MCF 10A (cell line): ENCODE measurements at regions of chr1 and their contacts with region 1.

Region 1: GRCh38 chr1:224851210-224851847 is 78.1 kb upstream of the DNAH14 start:
- DNase-seq: peak; percentile 85
- H3K4me3 Mint-ChIP-seq: no peak overlapping the region
- H3K27ac Mint-ChIP-seq: no peak overlapping the region
- H3K4me1 Mint-ChIP-seq: peaks cover 6% of the 10 kb centered on the region
- H3K27me3 Mint-ChIP-seq: peaks cover 9% of the 10 kb centered on the region
- CTCF ChIP-seq: peak; percentile 98

Region 2: GRCh38 chr1:224528900-224529299 is 322.4 kb before region 1 on chr1:
- CTCF ChIA-PET with region 1: interaction called, 45 read pairs
- POLR2A ChIA-PET with region 1: no interaction called
- intact Hi-C with region 1: no loop called
- DNase-seq: peak; percentile 76
- H3K4me3 Mint-ChIP-seq: no peak overlapping the region
- H3K27ac Mint-ChIP-seq: no peak overlapping the region
- H3K4me1 Mint-ChIP-seq: peaks cover 24% of the 10 kb centered on the region
- H3K27me3 Mint-ChIP-seq: no peaks in the 10 kb centered on the region
- CTCF ChIP-seq: no peak

Region 3: DNA sequence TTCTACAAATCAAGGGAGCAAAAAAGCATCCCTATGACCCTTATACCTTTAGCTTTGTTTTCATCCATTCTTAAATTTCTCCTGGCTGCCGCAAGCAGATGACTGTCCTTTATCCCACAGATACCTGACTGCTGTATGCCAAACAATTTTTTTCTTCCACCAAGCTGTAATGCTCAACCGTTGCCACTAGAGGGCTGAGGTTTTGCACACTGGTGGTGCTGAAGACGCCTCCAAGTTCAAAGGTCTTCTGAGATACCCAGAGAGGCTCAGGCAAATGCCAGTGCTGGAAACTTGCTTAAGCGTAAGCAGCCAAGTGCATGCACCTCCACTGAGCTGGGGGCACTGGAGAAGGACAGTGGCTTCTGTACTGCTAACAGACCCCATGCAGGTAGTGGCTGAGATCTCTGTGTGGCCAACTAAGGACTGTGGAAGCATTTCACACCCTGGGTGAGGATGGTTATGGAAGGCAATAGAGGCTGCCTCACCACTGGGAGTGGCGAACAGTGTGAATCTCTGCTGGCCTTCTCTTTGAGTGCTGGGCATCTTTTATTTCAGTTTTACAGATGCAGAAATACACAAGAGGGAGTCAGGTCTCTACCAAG is 206.7 kb before region 1 on chr1:
- CTCF ChIA-PET with region 1: interaction called, 278 read pairs
- POLR2A ChIA-PET with region 1: interaction called, 3 read pairs
- intact Hi-C with region 1: loop called (anchors 1 kb)
- DNase-seq: peak; percentile 83
- H3K4me3 Mint-ChIP-seq: no peak overlapping the region
- H3K27ac Mint-ChIP-seq: no peak overlapping the region
- H3K4me1 Mint-ChIP-seq: no peaks in the 10 kb centered on the region
- H3K27me3 Mint-ChIP-seq: peaks cover 21% of the 10 kb centered on the region
- CTCF ChIP-seq: peak; percentile 97

Region 4: GRCh38 chr1:224726441-224727182 is 124.7 kb before region 1 on chr1:
- CTCF ChIA-PET with region 1: interaction called, 29 read pairs
- POLR2A ChIA-PET with region 1: no interaction called
- intact Hi-C with region 1: no loop called
- DNase-seq: peak; percentile 86
- H3K4me3 Mint-ChIP-seq: no peak overlapping the region
- H3K27ac Mint-ChIP-seq: peak overlapping the region; percentile 87
- H3K4me1 Mint-ChIP-seq: peaks cover 34% of the 10 kb centered on the region
- H3K27me3 Mint-ChIP-seq: no peaks in the 10 kb centered on the region
- CTCF ChIP-seq: no peak

Region 5: GRCh38 chr1:224817382-224817781 is 33.9 kb before region 1 on chr1:
- CTCF ChIA-PET with region 1: interaction called, 23 read pairs
- POLR2A ChIA-PET with region 1: interaction called, 3 read pairs
- intact Hi-C with region 1: no loop called
- DNase-seq: no peak
- H3K4me3 Mint-ChIP-seq: no peak overlapping the region
- H3K27ac Mint-ChIP-seq: no peak overlapping the region
- H3K4me1 Mint-ChIP-seq: no peaks in the 10 kb centered on the region
- H3K27me3 Mint-ChIP-seq: peaks cover 35% of the 10 kb centered on the region
- CTCF ChIP-seq: no peak

Region 6: GRCh38 chr1:224894918-224895317 is 43.6 kb after region 1 on chr1:
- CTCF ChIA-PET with region 1: interaction called, 40 read pairs
- POLR2A ChIA-PET with region 1: no interaction called
- intact Hi-C with region 1: no loop called
- DNase-seq: peak; percentile 62
- H3K4me3 Mint-ChIP-seq: no peak overlapping the region
- H3K27ac Mint-ChIP-seq: no peak overlapping the region
- H3K4me1 Mint-ChIP-seq: no peaks in the 10 kb centered on the region
- H3K27me3 Mint-ChIP-seq: peaks cover 9% of the 10 kb centered on the region
- CTCF ChIP-seq: peak; percentile 47